Activated CD4-positive, alpha-beta memory T cell treated with anti-CD3 and anti-CD28 coated beads for 36 hours (primary cell): ENCODE measurements at regions of chr5 and their contacts with region 1.

Region 1: DNA sequence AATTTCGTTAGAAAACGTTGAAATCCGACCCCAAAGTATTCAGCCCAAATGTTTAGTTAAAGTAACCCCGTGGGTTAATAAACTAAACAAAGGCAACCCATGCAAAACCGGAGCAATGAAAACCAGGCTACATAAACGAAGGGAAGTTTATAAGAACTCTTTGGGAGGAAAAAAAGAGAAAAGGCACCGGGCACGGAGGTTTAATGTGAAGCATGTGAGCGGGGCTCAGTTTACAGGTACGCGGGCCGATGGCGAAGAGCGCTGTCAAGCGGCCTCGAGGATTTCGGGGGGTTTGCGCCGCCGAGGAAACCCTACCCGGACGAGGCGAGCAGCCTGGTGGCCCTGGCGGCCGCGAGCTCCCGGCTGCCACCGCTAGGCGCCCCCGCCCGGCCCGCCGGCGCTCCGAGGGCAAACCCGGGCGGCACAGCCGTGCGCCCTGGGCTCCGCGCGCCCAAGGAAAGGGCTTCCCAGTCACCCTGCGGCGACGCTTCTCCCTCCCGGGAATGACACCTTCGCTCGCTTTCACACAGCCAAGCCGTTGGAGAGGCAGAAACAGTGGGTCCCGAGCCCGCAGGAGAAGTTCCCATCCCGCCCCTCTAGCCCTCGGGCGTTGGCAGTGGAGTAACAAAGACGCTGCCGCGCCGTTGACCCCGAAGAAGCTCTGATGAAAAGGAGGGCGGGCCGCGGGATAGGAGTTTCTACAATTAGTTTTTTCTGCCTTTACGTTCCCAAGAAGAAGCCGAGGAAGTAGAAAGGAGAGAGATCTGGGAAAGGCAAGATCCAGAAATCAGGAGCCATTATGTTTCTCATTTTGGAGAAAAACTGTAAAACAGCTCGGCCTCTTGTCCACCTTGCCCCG is 126.0 kb downstream of the TMEM174 start:
- DNase-seq: peak; percentile 13
- H3K4me3 Mint-ChIP-seq: no peak overlapping the region
- H3K27ac Mint-ChIP-seq: no peak overlapping the region
- H3K4me1 Mint-ChIP-seq: peaks cover 18% of the 10 kb centered on the region
- H3K27me3 Mint-ChIP-seq: peaks cover 82% of the 10 kb centered on the region

Region 2: DNA sequence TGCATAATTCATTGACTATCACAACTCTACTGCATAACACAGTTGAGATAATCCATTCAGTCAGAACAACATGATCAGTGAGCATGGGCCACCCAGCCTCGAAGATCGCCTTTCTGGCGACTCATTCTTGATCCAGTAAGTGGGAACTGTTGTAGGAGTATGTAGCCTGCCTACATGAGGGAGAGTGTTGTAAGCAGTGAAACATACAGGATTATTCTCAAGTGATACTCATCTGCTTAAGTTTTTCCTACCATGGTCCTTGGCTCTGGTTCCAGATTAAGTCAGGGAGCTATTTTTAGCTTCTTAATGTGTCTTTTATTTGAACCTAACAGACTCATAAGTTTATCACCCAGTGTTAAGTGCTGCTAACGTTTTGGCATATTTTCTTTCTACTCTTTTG is 438.5 kb before region 1 on chr5:
- CTCF ChIA-PET with region 1: no interaction called
- POLR2A ChIA-PET with region 1: no interaction called
- intact Hi-C with region 1: no loop called
- DNase-seq: no peak
- H3K4me3 Mint-ChIP-seq: no peak overlapping the region
- H3K27ac Mint-ChIP-seq: no peak overlapping the region
- H3K4me1 Mint-ChIP-seq: peaks cover 37% of the 10 kb centered on the region
- H3K27me3 Mint-ChIP-seq: no peaks in the 10 kb centered on the region

Region 3: DNA sequence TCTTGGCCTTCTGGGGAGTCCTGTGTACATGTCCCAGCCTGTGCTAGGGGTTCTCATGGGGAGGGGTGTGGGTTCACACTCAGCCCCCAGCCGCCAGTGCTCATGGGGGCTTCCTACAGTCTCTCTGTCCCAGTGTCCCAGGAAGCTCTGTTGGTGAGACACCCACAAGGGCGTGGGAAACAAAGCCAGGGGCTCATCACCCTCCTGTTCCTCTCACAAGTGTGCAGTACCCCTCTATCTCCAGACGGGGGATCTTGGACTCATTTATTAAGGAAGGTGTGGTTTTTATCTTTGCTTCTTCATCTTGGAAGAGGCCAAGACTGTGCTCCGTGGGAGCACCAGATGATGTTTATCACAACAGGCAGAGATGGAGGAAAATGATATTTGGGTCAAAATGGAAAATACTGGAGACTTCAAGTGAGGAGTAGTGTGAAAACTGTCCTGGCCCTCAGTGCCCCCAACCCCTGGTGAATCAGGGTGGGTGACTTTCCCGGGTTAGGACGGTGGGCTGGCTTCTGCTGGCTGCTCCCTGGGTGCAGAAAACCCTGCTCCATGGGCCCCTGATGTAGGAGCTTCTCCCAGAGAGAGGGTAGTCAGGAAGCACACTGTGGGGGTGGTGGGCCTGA is 163.5 kb before region 1 on chr5:
- CTCF ChIA-PET with region 1: no interaction called
- POLR2A ChIA-PET with region 1: no interaction called
- intact Hi-C with region 1: loop called (anchors 10 kb)
- DNase-seq: no peak
- H3K4me3 Mint-ChIP-seq: no peak overlapping the region
- H3K27ac Mint-ChIP-seq: no peak overlapping the region
- H3K4me1 Mint-ChIP-seq: no peaks in the 10 kb centered on the region
- H3K27me3 Mint-ChIP-seq: peaks cover 50% of the 10 kb centered on the region

Region 4: GRCh38 chr5:73233347-73234200 is 65.4 kb before region 1 on chr5:
- CTCF ChIA-PET with region 1: no interaction called
- POLR2A ChIA-PET with region 1: no interaction called
- intact Hi-C with region 1: loop called (anchors 1 kb)
- DNase-seq: no peak
- H3K4me3 Mint-ChIP-seq: no peak overlapping the region
- H3K27ac Mint-ChIP-seq: no peak overlapping the region
- H3K4me1 Mint-ChIP-seq: peaks cover 23% of the 10 kb centered on the region
- H3K27me3 Mint-ChIP-seq: peaks cover 59% of the 10 kb centered on the region

Region 5: DNA sequence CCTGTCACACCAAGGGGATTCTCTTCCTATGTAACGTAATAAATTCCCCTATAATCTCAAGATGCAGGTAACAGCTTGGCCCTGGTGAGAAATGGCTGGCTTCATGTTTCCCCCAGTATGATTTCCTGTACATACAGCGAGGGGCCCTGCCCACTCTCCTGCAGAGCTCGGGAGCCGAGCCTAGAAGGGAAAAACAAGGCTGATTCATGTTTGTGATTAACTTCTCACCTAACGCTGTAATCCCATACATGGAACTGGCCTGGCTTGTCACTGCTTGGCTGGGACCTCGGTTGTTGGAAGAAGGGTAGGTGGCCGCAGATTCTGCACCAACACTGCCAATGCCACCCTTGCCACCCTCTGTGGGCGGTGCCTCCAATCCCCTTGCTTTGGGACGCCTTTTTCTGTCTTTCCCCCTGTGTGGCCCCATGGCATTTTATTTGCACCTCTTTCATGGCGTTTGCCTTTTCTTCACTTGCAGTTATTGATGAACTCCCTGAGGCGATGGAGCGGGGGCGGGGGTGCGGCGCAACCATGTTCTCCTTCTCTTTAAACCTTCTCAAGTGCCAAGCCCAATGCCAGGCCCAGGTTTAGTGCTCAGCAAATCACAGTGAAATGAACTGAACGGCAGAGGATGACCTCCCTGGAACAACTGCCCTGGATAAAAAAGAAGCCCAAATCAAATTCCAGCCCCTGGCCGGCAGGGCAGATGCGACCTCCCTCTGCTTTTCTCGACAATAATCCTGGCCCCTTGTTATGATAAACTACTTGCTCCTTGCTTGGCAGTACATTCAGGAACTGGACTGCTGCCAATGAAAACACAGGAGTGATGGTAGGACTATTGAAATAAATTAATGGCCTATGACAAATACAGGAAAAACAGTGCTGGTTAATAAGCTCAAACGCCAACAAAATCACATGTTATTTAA is 17.9 kb before region 1 on chr5:
- CTCF ChIA-PET with region 1: no interaction called
- POLR2A ChIA-PET with region 1: no interaction called
- intact Hi-C with region 1: no loop called
- DNase-seq: no peak
- H3K4me3 Mint-ChIP-seq: no peak overlapping the region
- H3K27ac Mint-ChIP-seq: no peak overlapping the region
- H3K4me1 Mint-ChIP-seq: no peaks in the 10 kb centered on the region
- H3K27me3 Mint-ChIP-seq: peaks cover 39% of the 10 kb centered on the region

Region 6: DNA sequence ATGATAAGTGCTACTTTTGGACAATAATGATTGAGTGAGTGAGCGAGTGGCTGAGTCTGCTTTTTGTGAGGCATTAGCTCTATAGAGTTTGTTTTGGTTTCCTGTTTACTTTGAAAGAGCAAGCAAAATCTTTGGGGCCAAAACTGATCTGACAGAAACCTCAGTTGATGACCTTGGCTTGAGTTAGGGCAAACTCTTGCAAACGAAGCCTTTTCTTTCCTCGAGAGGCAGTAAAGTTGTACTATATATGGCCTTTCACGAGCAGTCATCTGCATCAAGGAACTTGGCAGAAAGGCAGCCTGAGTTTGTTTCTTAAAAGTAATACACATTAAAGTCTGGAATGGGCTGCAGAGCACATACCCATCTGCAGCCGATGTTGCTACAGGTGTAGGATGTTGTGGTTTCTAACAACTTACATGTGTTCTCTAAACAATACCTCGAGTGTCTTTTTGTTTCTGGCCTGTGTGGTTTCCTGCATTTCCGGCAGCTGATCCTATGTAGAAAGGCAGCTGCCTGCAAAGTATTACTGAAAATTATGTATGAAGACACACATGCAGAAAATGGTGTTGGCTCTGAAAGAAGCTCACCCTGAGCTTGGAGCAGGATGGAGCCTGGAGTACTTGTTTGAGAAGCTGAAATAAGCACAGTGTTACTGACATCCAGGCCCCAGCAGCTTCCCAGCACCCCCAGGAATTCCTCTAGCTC is 88.8 kb after region 1 on chr5:
- CTCF ChIA-PET with region 1: no interaction called
- POLR2A ChIA-PET with region 1: no interaction called
- intact Hi-C with region 1: loop called (anchors 10 kb)
- DNase-seq: peak; percentile 50
- H3K4me3 Mint-ChIP-seq: no peak overlapping the region
- H3K27ac Mint-ChIP-seq: no peak overlapping the region
- H3K4me1 Mint-ChIP-seq: peaks cover 21% of the 10 kb centered on the region
- H3K27me3 Mint-ChIP-seq: peaks cover 22% of the 10 kb centered on the region